ENCODE measurements at regions of chr2 and their contacts with region 1.

Region 1: DNA sequence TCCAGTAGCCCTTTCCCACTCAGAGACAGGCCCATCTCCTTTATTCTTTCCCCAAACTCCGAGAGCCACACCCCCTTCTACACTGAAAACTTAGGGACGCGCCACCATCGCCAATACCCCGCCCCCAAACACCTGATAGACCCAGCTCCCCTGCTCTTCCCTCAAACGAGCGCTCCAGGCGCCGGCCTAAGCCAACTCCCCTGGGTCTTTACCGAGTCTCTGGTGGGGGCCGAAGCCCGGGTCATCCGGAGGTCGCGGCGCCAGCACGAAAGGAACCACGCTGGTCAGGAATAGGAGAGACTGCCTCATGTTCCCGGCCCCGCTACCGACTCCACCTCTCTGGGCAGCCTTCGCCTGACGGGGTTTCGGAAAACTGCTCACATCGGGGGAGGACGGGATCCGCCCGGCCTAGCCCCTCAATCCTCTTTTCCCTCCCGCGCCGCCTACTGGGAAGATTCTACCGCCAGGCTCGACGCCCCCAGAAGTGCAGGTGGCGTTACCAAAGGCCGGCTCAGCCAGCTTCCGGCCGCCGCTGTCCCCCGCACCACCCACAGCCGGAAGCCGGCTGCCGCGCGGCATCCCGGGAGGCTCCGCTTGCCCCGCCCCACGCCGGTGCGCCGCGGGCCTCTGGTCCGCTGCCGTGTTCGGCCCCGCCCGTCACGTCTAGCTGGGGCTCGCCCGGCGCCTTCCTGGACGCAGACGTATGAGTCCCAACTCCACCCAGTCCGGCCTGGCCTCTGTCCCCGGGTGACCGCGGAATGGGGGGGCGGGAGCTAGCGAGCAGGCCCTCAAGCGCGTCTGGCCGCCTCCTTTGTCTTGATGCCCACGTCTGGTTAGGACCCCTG is at the start of gene ADAM17:
- DNase-seq: peak; percentile 98 to 99
- ATAC-seq: peak; percentile 98
- H3K4me3 ChIP-seq: peak within 1 kb of the TSS; percentile 61 to 71
- H3K27ac ChIP-seq: peak within 1 kb of the TSS; percentile 87 to 98
- H3K4me1 ChIP-seq: peaks cover 0 to 2% of the 10 kb centered on the region in 2 donors
- H3K27me3 ChIP-seq: no peaks in the 10 kb centered on the region
- total RNA-seq, gene ADAM17: 42.7 to 47.0 TPM

Region 2: GRCh38 chr2:9114516-9114915 is 441.0 kb before region 1 on chr2:
- intact Hi-C with region 1: no loop called
- DNase-seq: no peak
- ATAC-seq: no peak
- H3K4me3 ChIP-seq: no peak overlapping the region
- H3K27ac ChIP-seq: no peak overlapping the region
- H3K4me1 ChIP-seq: no peaks in the 10 kb centered on the region
- H3K27me3 ChIP-seq: no peaks in the 10 kb centered on the region

Region 3: GRCh38 chr2:9497017-9497416 is 58.5 kb before region 1 on chr2:
- intact Hi-C with region 1: loop called in 1 of 2 experiments (anchors 10 kb)
- DNase-seq: no peak
- ATAC-seq: no peak
- H3K4me3 ChIP-seq: no peak overlapping the region
- H3K27ac ChIP-seq: peak overlapping the region in 1 of 2 donors; percentile 26
- H3K4me1 ChIP-seq: peaks cover 0 to 1% of the 10 kb centered on the region in 2 donors
- H3K27me3 ChIP-seq: no peaks in the 10 kb centered on the region

Region 4: DNA sequence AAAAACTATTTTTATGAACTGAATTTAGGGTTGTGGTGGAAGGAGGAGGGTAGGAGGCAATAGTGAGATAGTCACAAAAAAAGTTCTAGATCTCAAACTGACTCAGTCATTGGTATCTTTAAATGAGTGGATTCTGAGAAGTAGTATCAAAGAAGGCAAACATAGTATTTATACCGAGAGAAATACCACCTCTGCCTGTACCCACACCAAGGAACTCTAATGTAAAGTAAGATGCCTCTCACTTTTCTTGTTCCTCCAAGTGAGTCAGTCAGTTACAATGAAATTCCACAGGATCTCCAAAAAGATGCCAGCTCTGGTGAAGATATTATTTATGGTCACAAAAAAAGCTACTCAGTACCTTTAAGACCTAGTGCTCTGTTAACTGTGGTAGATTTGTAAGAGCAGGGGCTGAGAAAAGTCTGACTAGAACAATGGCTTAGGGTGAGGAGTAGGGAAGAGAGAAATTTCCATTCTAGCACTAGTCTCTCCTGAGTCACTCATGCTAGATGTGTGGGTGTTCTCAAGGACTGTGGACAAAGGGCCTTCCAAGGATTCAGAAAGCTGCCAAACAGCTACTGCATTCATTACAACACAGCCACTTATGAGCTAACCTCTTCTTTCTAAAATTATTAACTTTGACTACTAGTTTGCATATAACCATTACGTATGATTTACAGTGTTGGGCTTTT is 39.0 kb after region 1 on chr2:
- intact Hi-C with region 1: loop called in 1 of 2 experiments (anchors 5 kb)
- DNase-seq: no peak
- ATAC-seq: peak; percentile 87
- H3K4me3 ChIP-seq: no peak overlapping the region
- H3K27ac ChIP-seq: peak overlapping the region in 1 of 2 donors; percentile 25
- H3K4me1 ChIP-seq: peaks cover 2 to 3% of the 10 kb centered on the region in 2 donors
- H3K27me3 ChIP-seq: no peaks in the 10 kb centered on the region

Region 5: GRCh38 chr2:9693211-9693520 is 137.6 kb after region 1 on chr2:
- intact Hi-C with region 1: loop called in 1 of 2 experiments (anchors 10 kb)
- DNase-seq: peak; percentile 89 to 92
- ATAC-seq: peak; percentile 81
- H3K4me3 ChIP-seq: no peak overlapping the region
- H3K27ac ChIP-seq: peak overlapping the region in 1 of 2 donors; percentile 55
- H3K4me1 ChIP-seq: no peaks in the 10 kb centered on the region
- H3K27me3 ChIP-seq: no peaks in the 10 kb centered on the region

Measured in aorta (tissue), 5 donors.